ENCODE measurements at regions of chr16 and their contacts with region 1.

Region 1: GRCh38 chr16:72840631-72841381 is 207.1 kb downstream of the ZFHX3 start:
- DNase-seq: no peak
- H3K4me3 ChIP-seq: no peak overlapping the region
- H3K27me3 ChIP-seq: no peaks in the 10 kb centered on the region
- CTCF ChIP-seq: no peak

Region 2: GRCh38 chr16:72291531-72291981 is 549.2 kb before region 1 on chr16:
- CTCF ChIA-PET with region 1: no interaction called
- POLR2A ChIA-PET with region 1: interaction called, 10 read pairs
- DNase-seq: peak; percentile 97
- H3K4me3 ChIP-seq: no peak overlapping the region
- H3K27me3 ChIP-seq: no peaks in the 10 kb centered on the region
- CTCF ChIP-seq: no peak